Ovary (tissue), 10 donors: ENCODE measurements at regions of chr19 and their contacts with region 1.

Region 1: DNA sequence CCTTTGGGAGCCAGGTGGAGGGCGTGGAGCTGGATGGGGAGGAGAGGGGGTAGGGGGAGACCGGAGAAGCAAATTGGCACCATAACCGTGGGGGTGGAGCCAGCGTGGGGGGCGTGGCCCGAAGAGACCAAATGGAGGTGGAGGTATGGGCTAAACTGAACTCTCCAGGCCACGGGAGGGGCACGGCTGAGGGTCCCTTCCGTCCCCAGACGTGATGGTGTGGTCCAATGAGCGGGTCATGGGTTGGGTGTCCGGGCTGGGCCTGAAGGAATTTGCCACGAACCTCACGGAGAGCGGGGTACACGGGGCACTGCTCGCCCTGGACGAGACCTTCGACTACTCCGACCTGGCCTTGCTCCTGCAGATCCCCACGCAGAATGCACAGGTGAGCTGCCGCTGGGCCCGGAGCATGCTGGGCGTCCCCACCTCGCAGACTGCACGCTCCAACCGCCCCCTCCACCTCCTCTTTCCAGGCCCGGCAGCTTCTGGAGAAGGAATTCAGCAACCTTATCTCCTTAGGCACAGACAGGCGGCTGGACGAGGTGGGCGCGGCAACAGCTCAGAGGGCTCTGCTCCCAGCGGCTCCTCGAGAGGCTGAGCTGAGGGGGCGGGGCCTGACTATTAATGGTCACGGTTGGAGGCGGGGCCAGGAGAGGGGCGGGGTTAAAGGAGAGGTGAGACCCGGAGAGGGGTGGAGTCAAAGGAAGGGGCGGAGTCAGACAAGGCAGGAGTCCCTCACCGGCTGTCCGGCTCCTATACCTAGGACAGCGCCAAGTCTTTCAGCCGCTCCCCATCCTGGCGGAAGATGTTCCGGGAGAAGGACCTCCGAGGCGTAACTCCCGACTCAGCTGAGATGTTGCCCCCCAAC is 6.2 kb downstream of the HRC start:
- DNase-seq: peak; percentile 97 to 99 (median 99)
- H3K4me3 ChIP-seq: peak overlapping the region; percentile 42
- H3K27ac ChIP-seq: peak overlapping the region in 1 of 2 donors; percentile 33
- H3K4me1 ChIP-seq: peaks cover 4% of the 10 kb centered on the region
- H3K27me3 ChIP-seq: no peaks in the 10 kb centered on the region
- CTCF ChIP-seq: no peak
- EP300 ChIP-seq: no peak
- POLR2A ChIP-seq: no peak

Region 2: GRCh38 chr19:49104229-49104864 is 44.7 kb before region 1 on chr19:
- intact Hi-C with region 1: loop called in 3 of 4 experiments (anchors 5 to 10 kb)
- DNase-seq: no peak
- H3K4me3 ChIP-seq: no peak overlapping the region
- H3K27ac ChIP-seq: no peak overlapping the region
- H3K4me1 ChIP-seq: no peaks in the 10 kb centered on the region
- H3K27me3 ChIP-seq: no peaks in the 10 kb centered on the region
- CTCF ChIP-seq: no peak
- EP300 ChIP-seq: no peak
- POLR2A ChIP-seq: no peak